SK-N-SH (cell line): ENCODE measurements at regions of chr2 and their contacts with region 1.

Region 1: DNA sequence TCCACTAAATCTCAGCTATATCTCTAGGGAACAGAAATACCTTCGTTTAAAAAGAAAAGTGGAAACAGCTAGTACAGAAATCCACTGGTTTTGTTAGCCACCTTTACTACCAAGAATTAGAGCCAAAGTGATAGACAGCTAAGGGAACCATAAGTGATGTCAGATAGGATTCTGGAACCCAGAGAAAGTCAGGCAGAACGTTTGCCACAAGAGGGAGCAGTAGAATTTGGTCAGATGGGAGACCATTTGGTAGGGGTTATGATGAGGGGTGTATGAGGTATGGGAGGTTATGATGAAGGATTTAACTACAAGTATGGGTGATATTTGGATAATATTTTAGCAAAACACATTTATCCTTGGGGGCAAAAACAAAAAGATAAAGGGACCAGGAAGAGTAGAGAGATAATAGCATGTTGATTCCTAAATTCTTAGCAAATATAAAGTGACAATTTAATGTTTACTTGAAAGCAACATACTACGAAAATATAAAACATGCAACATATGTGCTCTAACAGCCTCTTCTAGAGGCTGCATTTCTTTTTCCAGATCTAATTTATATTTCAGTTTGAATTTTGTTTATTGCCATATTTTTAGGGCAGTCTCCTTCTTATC is 3.3 kb downstream of the SLC8A1 start:
- DNase-seq: peak; percentile 60
- H3K4me3 ChIP-seq: peak overlapping the region in 1 of 2 experiments; percentile 9; a peak in 1 of 4 replicates
- H3K27ac ChIP-seq: peak overlapping the region in 1 of 2 experiments; percentile 88; a peak in 1 of 4 replicates
- H3K4me1 ChIP-seq: peaks cover 0 to 17% of the 10 kb centered on the region in 2 experiments; a peak in 2 of 4 replicates
- H3K27me3 ChIP-seq: no peaks in the 10 kb centered on the region
- CTCF ChIP-seq: peak; percentile 80
- EP300 ChIP-seq: no peak
- RAD21 ChIP-seq: peak; percentile 76

Region 2: GRCh38 chr2:40168041-40168442 is 280.5 kb before region 1 on chr2:
- CTCF ChIA-PET with region 1: no interaction called
- POLR2A ChIA-PET with region 1: no interaction called
- DNase-seq: no peak
- H3K4me3 ChIP-seq: no peak overlapping the region
- H3K27ac ChIP-seq: no peak overlapping the region
- H3K4me1 ChIP-seq: no peaks in the 10 kb centered on the region; a peak in 1 of 4 replicates
- H3K27me3 ChIP-seq: no peaks in the 10 kb centered on the region
- CTCF ChIP-seq: no peak
- EP300 ChIP-seq: no peak
- RAD21 ChIP-seq: no peak

Region 3: DNA sequence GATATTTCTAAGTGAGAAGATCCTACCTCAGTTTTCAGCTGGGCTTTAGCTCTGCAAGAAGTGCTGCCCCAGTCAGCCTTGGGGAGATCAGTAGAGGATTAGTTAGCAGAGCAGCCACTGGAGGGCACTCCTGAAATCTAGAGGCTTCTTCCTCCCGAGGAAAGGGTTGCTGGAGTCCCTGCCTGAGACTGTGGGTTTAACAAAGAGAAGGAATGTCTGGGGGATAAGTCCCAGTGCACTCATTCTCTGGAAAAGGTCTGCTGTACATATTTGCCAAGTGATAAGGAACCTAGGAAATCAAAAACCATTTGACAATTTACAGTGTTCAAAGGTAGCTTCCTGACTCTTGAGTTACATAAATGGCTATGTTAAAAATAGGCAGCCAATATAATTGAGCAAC is 203.9 kb before region 1 on chr2:
- CTCF ChIA-PET with region 1: interaction called, 13 read pairs
- POLR2A ChIA-PET with region 1: no interaction called
- DNase-seq: peak; percentile 42
- H3K4me3 ChIP-seq: no peak overlapping the region
- H3K27ac ChIP-seq: no peak overlapping the region
- H3K4me1 ChIP-seq: peaks cover 0 to 8% of the 10 kb centered on the region in 2 experiments; a peak in 2 of 4 replicates
- H3K27me3 ChIP-seq: no peaks in the 10 kb centered on the region
- CTCF ChIP-seq: peak; percentile 65
- EP300 ChIP-seq: no peak
- RAD21 ChIP-seq: peak; percentile 74

Region 4: GRCh38 chr2:40421631-40422297 is 26.8 kb before region 1 on chr2:
- CTCF ChIA-PET with region 1: interaction called, 22 read pairs
- POLR2A ChIA-PET with region 1: no interaction called
- DNase-seq: no peak
- H3K4me3 ChIP-seq: no peak overlapping the region
- H3K27ac ChIP-seq: no peak overlapping the region
- H3K4me1 ChIP-seq: peaks cover 0 to 8% of the 10 kb centered on the region in 2 experiments; a peak in 2 of 4 replicates
- H3K27me3 ChIP-seq: no peaks in the 10 kb centered on the region
- CTCF ChIP-seq: no peak
- EP300 ChIP-seq: no peak
- RAD21 ChIP-seq: no peak

Region 5: DNA sequence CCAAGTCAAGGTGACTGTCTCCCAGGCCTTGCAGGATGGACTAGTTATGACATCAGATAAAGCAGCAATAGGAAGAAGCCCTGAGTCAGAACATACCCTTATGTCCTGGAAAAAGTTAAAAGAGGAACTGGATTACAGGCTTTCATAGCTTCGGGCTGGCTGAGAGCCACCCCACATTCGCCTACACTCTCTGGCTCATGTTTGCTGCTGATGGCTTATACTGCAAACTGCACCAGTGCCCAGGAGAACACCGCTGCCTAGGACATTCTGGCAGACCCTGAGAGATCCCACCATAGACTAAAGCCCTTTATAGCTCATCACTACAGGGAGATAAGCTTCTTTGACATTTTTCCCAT is 17.0 kb before region 1 on chr2:
- CTCF ChIA-PET with region 1: interaction called, 71 read pairs
- POLR2A ChIA-PET with region 1: no interaction called
- DNase-seq: no peak
- H3K4me3 ChIP-seq: no peak overlapping the region
- H3K27ac ChIP-seq: peak overlapping the region; percentile 29 to 93; a peak in 3 of 4 replicates
- H3K4me1 ChIP-seq: peaks cover 20 to 35% of the 10 kb centered on the region in 2 experiments
- H3K27me3 ChIP-seq: no peaks in the 10 kb centered on the region
- CTCF ChIP-seq: no peak
- EP300 ChIP-seq: peak in 1 of 2 experiments; percentile 42; a peak in 1 of 4 replicates
- RAD21 ChIP-seq: no peak

Region 6: GRCh38 chr2:40488101-40488601 is 39.6 kb after region 1 on chr2:
- CTCF ChIA-PET with region 1: interaction called, 13 read pairs
- POLR2A ChIA-PET with region 1: no interaction called
- DNase-seq: peak; percentile 32
- H3K4me3 ChIP-seq: no peak overlapping the region
- H3K27ac ChIP-seq: no peak overlapping the region
- H3K4me1 ChIP-seq: peaks cover 0 to 3% of the 10 kb centered on the region in 2 experiments; a peak in 1 of 4 replicates
- H3K27me3 ChIP-seq: no peaks in the 10 kb centered on the region
- CTCF ChIP-seq: peak; percentile 74
- EP300 ChIP-seq: no peak
- RAD21 ChIP-seq: peak; percentile 58

Region 7: GRCh38 chr2:40554668-40555285 is 106.2 kb after region 1 on chr2:
- CTCF ChIA-PET with region 1: interaction called, 18 read pairs
- POLR2A ChIA-PET with region 1: no interaction called
- DNase-seq: peak; percentile 32
- H3K4me3 ChIP-seq: no peak overlapping the region; a peak in 1 of 4 replicates
- H3K27ac ChIP-seq: no peak overlapping the region
- H3K4me1 ChIP-seq: peaks cover 0 to 4% of the 10 kb centered on the region in 2 experiments; a peak in 2 of 4 replicates
- H3K27me3 ChIP-seq: no peaks in the 10 kb centered on the region
- CTCF ChIP-seq: peak; percentile 90
- EP300 ChIP-seq: no peak
- RAD21 ChIP-seq: peak; percentile 82

Region 8: GRCh38 chr2:41026613-41027012 is 578.0 kb after region 1 on chr2:
- CTCF ChIA-PET with region 1: no interaction called
- POLR2A ChIA-PET with region 1: no interaction called
- DNase-seq: no peak
- H3K4me3 ChIP-seq: no peak overlapping the region
- H3K27ac ChIP-seq: no peak overlapping the region
- H3K4me1 ChIP-seq: peaks cover 0 to 11% of the 10 kb centered on the region in 2 experiments; a peak in 2 of 4 replicates
- H3K27me3 ChIP-seq: no peaks in the 10 kb centered on the region
- CTCF ChIP-seq: no peak
- EP300 ChIP-seq: no peak
- RAD21 ChIP-seq: no peak